Mammary epithelial cell (primary cell): ENCODE measurements at regions of chr6 and their contacts with region 1.

Region 1: GRCh38 chr6:10138917-10139316 is 276.0 kb downstream of the TFAP2A start:
- DNase-seq: peak; percentile 72
- H3K4me3 ChIP-seq: no peak overlapping the region
- H3K27ac ChIP-seq: no peak overlapping the region
- H3K4me1 ChIP-seq: peaks cover 16% of the 10 kb centered on the region
- H3K27me3 ChIP-seq: no peaks in the 10 kb centered on the region
- CTCF ChIP-seq: no peak

Region 2: DNA sequence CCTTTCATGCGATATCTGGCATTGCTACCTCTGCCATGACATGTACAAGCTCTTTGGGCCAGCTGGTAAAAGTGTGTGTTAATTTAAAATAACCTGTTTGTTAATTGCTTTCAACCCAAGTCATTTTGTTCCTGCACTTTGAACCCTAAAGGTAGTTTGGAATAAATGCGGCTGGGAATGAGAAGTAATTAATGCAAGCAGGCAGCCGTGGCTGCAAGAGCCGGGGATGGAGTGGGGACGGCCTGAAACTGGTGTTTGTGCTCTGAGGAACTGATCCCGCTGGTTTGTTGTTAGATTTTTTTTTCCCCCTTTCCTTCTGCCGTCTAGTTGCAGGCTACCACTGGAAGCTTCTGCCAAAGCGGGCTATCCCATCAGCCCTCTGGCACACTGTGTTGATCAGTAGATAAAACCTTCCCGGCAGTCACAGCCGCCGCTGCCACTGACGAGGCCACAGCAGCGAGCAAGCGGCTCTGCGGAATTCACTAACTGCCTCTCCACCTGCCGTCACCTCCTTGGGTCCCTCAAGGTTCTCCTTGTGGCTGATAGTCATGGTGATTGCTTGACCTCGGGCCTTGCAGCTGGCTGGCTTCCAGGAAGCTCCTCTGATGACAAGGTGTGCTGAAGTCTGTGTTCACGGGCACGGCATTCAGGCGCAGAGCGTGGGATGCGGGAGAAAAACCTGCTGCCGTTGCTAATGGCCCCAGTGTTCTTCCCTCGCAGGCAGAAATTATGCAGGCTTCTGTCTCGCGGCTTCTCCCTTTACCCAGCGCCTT is 40.0 kb before region 1 on chr6:
- CTCF ChIA-PET with region 1: no interaction called
- dilution Hi-C with region 1: loop called (anchors 5 kb)
- in situ Hi-C with region 1: no loop called
- intact Hi-C with region 1: no loop called
- DNase-seq: peak; percentile 37
- H3K4me3 ChIP-seq: peak overlapping the region; percentile 10 to 40 (median 40)
- H3K27ac ChIP-seq: no peak overlapping the region
- H3K4me1 ChIP-seq: peaks cover 31% of the 10 kb centered on the region
- H3K27me3 ChIP-seq: no peaks in the 10 kb centered on the region
- CTCF ChIP-seq: no peak

Region 3: DNA sequence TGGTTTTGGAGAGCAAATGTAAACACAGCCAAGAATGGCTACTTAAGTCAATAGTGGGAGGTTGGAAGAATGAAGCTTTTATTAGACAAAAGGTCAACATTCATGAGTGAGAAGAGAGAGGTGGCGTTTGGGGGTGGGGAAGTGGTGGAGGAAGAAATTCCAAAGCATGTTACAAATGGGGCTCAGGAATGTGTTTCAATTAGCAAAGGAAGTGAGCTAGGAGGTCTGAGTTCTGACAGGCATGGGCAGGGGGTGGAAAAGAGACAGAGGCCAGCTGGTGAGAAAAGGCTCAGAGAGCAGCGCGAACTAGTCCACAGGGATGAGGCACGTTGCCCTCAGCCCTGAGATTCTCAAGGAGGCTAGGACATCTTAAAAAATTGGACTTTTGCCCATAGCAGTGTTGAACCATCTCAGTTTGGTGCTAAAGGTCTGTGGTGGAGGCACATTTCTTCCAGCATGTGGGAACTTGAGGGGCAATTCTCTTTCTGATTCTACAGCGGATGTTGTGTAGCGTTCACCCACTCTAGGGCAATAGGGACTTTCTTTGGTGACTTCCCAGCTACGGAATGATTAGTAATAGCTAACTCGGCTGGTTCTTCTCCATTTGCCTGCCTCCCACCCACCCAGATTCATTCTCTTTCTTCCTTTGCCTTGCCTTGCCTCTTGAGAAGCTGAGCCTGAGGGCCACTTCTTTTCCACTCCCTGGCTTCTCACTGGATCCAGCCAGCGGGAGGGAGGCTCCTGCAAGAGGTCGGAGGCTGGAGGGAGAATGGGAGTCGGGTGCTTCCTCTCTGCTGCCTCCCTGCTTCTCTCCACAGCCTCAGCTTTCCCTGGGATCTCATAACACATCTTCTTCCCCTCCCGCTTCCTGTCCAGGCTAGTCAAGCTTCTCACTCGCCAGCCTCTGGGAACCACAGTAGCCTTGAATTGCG is 1138.6 kb after region 1 on chr6:
- CTCF ChIA-PET with region 1: no interaction called
- dilution Hi-C with region 1: no loop called
- in situ Hi-C with region 1: no loop called
- intact Hi-C with region 1: no loop called
- DNase-seq: peak; percentile 73
- H3K4me3 ChIP-seq: no peak overlapping the region
- H3K27ac ChIP-seq: peak overlapping the region; percentile 48
- H3K4me1 ChIP-seq: peaks cover 22% of the 10 kb centered on the region
- H3K27me3 ChIP-seq: no peaks in the 10 kb centered on the region
- CTCF ChIP-seq: no peak